Dorsolateral prefrontal cortex (tissue), 120 donors: ENCODE measurements at regions of chr15 and their contacts with region 1.

Region 1: DNA sequence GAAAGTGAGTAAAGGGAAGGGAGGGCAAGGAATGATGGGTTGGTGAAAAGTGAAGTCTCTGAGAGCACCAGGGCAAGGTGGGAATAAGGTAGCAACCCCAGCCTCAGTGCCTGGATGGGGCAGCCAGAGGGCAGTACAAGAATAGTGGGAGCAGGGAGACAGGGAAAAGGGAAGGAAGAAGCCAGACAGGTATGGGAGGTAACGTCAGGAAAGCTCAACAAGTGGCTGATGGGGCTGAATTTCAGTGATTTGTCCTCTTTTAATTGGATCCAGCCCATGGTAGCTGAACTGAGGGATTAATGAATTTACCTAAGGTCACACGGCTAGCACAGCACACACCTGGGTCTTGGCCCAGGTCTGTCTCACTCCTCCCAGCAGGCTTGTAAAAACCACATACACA is 12.6 kb downstream of the RORA start:
- DNase-seq: no peak
- H3K4me3 ChIP-seq: no peak overlapping the region
- H3K27ac ChIP-seq: no peak overlapping the region
- H3K27me3 ChIP-seq: no peaks in the 10 kb centered on the region
- CTCF ChIP-seq: no peak

Region 2: DNA sequence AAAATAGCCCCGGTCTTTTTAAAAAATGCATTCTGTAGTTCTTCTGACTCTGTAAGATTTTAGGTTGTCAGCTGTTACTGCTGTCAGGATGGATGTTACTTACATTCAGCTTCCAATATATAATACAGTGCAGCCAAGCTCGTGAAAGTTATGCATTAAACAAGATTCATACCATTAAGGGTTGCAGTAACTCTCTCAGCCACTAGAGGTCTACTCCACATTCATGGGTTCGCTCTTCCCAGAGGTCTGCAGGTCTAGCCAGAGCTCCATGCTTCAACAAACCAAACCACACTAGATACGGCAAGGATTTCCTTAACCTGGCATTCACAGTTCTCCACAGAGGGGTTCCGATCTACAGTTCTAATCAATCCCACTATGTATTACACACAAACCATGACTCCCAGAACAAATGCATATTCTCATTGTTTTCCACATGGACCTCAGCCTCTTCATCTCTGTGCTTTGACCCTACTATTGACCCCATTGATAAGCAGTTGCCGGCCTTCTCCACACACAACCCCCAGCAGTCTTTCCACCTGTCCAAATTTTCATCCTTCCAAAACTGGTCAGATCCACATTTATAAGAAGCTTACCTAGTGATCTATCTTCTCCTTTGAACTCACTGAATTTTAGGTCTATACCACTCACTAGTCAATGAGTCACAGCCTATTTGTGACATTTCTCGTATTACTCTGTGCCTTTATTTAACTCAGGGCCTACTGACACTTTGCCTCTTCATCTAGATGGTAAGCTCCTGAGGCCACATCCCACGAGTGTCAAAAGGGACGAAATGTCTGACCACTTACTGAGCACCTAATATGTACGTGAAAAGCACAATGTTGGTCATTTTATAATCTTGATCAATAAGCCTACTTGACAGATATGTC is 21.2 kb before region 1 on chr15:
- intact Hi-C with region 1: loop called in 1 of 2 experiments (anchors 2 kb)
- DNase-seq: no peak
- H3K4me3 ChIP-seq: no peak overlapping the region
- H3K27ac ChIP-seq: peak overlapping the region in 12 of 59 donors; percentile 11 to 78 (median 56)
- H3K27me3 ChIP-seq: no peaks in the 10 kb centered on the region
- CTCF ChIP-seq: peak; percentile 26 to 70 (median 58)

Region 3: GRCh38 chr15:61318301-61318700 is 101.8 kb after region 1 on chr15:
- intact Hi-C with region 1: no loop called
- DNase-seq: no peak
- H3K4me3 ChIP-seq: no peak overlapping the region
- H3K27ac ChIP-seq: no peak overlapping the region
- H3K27me3 ChIP-seq: peaks cover 0 to 5% (median 0%) of the 10 kb centered on the region in 45 donors
- CTCF ChIP-seq: no peak